Caco-2 (cell line): ENCODE measurements at regions of chr2 and their contacts with region 1.

Region 1: DNA sequence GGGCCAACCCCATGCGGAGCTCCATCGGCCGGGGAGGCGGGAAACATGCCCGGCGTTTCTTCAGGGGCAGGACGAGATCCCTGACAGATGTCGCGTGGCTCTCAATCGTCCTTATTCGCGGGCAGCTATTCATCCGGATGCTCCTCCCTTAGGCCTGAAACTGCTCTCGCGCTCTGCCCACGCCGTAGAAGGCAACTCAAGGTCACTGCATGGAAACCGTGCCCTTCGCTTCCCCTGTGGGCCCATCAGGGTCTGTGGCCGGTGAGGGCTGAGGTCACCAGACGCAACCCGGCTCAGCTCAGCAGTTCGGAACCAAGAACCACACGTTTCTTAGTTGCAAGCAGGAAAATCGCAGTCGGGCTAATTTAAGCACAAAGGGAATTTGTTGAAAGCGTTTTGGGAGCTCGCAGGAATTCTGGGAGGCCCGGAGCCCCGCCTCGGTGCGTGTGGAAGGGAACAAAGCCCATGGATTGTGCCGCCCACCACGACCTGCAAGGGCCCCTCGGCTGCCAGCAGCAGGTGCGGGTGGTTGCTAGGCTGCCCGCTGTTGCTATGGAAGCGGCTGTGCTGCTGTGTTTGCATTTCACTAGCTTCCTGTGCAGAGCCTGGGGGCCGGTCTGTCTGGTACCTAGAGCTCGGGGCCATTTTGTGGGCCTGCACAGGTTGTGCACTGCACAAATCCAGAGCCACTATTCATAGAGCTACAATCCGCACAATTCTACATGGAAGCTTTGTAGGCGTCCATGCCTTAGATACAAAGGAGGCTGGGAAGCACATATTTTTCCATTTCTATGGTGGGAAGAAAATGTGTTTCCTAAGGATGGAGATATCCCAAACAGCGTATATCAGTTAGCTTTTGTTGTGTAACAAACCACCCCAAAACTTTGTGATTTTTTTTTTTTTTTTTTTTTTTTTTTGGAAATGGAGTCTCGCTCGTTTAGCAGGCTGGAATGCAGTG is 6.0 kb upstream of the ALLC start:
- DNase-seq: peak; percentile 75 to 77
- H3K4me3 ChIP-seq: peak overlapping the region; percentile 37
- H3K4me3 Mint-ChIP-seq: peak overlapping the region; percentile 60
- H3K27ac Mint-ChIP-seq: peak overlapping the region; percentile 79
- H3K4me1 ChIP-seq: peaks cover 7% of the 10 kb centered on the region; the same call in 1 of the 2 replicates
- H3K4me1 Mint-ChIP-seq: peaks cover 9% of the 10 kb centered on the region
- H3K27me3 ChIP-seq: no peaks in the 10 kb centered on the region
- H3K27me3 Mint-ChIP-seq: no peaks in the 10 kb centered on the region
- CTCF ChIP-seq: no peak

Region 2: DNA sequence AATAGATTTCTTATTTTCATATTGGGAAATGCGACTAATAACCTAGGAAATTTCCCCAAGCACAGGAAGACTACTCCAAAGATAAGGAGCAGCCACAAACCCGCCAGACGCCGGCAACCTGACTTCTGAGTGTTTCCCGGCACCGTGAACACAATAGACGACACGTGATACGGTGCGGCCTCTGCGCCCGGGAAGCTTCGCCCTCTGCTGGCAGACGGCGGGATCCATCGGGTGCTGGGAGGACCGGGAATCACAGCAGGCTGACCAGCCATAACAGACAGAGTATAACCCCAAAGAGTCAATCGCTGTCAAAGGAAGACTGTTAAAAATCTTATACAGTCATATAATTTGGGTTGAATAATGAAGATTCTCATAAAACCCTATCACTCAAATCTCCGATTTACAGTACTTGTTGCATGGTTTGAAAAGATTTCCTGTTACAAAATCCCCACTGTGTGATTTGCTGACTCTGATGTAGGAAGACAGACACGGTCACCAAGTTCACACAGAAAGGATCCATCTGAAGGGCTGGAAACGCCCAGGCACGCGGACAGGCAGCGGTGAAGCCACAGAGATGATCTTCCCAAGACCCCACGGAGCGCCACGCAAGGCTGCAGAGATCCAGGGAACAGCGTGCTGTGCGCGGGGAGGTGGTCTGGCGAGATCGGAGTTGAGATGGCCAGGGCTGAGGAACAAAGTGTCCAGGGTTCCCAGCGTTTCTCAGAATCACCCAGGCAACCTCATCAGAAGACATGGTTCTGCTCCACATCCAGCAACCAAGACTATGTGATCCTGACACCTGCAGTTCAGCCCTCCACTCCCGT is 348.2 kb before region 1 on chr2:
- CTCF ChIA-PET with region 1: no interaction called
- POLR2A ChIA-PET with region 1: no interaction called
- intact Hi-C with region 1: loop called (anchors 2 kb)
- DNase-seq: peak; percentile 83 to 92
- H3K4me3 ChIP-seq: no peak overlapping the region
- H3K4me3 Mint-ChIP-seq: no peak overlapping the region
- H3K27ac Mint-ChIP-seq: no peak overlapping the region
- H3K4me1 ChIP-seq: no peaks in the 10 kb centered on the region
- H3K4me1 Mint-ChIP-seq: no peaks in the 10 kb centered on the region
- H3K27me3 ChIP-seq: no peaks in the 10 kb centered on the region
- H3K27me3 Mint-ChIP-seq: no peaks in the 10 kb centered on the region
- CTCF ChIP-seq: peak; percentile 95 to 97

Region 3: DNA sequence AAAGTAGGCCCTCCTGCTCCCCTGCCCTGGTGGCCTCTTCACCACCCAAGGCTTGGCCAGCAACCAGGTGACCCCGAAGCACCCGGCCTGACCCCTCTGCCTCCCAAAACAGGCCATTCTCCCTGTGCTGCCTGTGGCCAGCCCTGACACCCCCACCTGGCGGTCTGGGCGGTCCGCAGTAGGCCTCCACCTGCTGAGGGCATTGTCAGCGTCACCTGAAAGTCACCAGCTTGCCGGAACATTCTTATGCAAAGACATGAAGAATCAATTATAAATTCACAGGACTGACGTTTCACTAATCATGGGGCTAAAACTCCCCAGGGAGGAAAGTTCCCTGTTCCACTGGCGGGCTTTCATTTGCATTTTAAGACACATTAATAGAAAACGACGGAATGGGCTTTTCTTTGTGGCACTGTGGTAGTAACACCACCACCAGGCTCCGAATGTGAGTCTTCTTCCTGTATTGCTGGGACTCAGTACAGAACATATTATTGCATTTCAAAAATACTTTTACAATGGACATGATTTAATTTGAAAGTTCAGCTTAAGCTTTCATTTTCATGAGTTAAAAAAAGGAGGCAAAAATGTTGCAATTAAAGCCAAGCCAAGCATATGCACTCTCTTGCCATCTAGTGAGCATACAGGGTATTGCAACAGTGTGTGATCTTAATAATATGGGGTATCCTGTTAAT is 190.0 kb before region 1 on chr2:
- CTCF ChIA-PET with region 1: no interaction called
- POLR2A ChIA-PET with region 1: no interaction called
- intact Hi-C with region 1: loop called (anchors 5 kb)
- DNase-seq: peak in 1 of 2 experiments; percentile 57
- H3K4me3 ChIP-seq: no peak overlapping the region
- H3K4me3 Mint-ChIP-seq: no peak overlapping the region
- H3K27ac Mint-ChIP-seq: no peak overlapping the region
- H3K4me1 ChIP-seq: peaks cover 20% of the 10 kb centered on the region
- H3K4me1 Mint-ChIP-seq: no peaks in the 10 kb centered on the region
- H3K27me3 ChIP-seq: no peaks in the 10 kb centered on the region
- H3K27me3 Mint-ChIP-seq: no peaks in the 10 kb centered on the region
- CTCF ChIP-seq: peak; percentile 74 to 84

Region 4: DNA sequence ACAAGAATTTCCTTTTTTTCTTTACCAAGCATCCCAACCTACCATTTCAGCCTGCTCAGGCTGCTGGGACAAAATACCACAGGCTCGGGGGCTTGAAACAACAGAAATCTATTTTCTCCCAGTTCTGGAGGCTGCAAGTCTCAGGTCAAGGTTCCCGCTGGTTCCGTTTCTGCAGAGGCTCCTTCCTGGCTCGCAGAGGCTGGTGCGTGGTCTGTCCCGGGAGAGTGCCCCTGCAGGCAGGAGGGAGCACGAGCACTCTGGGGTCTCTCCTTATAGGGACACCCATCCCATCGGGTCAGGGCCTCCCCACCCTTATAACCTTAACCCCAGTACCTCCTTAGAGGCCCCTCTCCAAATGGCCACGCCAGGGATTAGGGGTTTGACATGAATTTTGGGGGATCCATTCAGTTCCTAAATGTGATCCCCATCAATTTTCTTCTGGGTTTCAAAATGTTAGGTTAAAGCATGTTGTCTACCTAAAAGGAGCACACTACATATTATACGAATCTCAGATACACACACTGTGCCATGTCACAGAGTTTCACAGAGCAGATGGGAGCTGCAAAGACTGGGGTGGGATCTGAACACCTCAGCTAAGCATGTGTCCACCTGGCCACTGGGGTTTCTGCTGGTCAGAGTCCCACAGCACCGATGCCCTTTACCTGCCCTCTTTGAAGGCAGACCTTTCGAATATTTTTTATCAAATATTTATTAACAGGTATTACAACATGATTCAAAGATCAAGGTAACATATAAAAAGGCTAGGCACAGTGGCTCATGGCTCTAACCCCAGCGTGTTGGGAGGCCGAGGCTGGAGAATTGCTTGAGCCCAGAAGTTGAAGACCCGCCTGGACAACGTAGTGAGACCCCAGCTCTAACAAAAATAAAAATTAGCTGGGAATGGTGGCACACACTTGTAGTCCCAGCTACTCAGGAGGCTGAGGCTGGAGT is 115.0 kb before region 1 on chr2:
- CTCF ChIA-PET with region 1: interaction called, 7 read pairs
- POLR2A ChIA-PET with region 1: no interaction called
- intact Hi-C with region 1: loop called (anchors 1 kb)
- DNase-seq: peak; percentile 84 to 87
- H3K4me3 ChIP-seq: peak overlapping the region; percentile 54
- H3K4me3 Mint-ChIP-seq: peak overlapping the region; percentile 95
- H3K27ac Mint-ChIP-seq: peak overlapping the region; percentile 99
- H3K4me1 ChIP-seq: peaks cover 7% of the 10 kb centered on the region; the same call in 1 of the 2 replicates
- H3K4me1 Mint-ChIP-seq: peaks cover 7% of the 10 kb centered on the region
- H3K27me3 ChIP-seq: no peaks in the 10 kb centered on the region
- H3K27me3 Mint-ChIP-seq: no peaks in the 10 kb centered on the region
- CTCF ChIP-seq: peak; percentile 46 to 81

Region 5: GRCh38 chr2:3575534-3576262 is 76.3 kb before region 1 on chr2:
- CTCF ChIA-PET with region 1: no interaction called
- POLR2A ChIA-PET with region 1: no interaction called
- intact Hi-C with region 1: loop called (anchors 1 kb)
- DNase-seq: no peak
- H3K4me3 ChIP-seq: peak overlapping the region; percentile 97
- H3K4me3 Mint-ChIP-seq: peak overlapping the region; percentile 95
- H3K27ac Mint-ChIP-seq: peak overlapping the region; percentile 96
- H3K4me1 ChIP-seq: peaks cover 17% of the 10 kb centered on the region
- H3K4me1 Mint-ChIP-seq: peaks cover 34% of the 10 kb centered on the region
- H3K27me3 ChIP-seq: no peaks in the 10 kb centered on the region
- H3K27me3 Mint-ChIP-seq: no peaks in the 10 kb centered on the region
- CTCF ChIP-seq: no peak